ENCODE measurements at regions of chr1 and their contacts with region 1.

Region 1: DNA sequence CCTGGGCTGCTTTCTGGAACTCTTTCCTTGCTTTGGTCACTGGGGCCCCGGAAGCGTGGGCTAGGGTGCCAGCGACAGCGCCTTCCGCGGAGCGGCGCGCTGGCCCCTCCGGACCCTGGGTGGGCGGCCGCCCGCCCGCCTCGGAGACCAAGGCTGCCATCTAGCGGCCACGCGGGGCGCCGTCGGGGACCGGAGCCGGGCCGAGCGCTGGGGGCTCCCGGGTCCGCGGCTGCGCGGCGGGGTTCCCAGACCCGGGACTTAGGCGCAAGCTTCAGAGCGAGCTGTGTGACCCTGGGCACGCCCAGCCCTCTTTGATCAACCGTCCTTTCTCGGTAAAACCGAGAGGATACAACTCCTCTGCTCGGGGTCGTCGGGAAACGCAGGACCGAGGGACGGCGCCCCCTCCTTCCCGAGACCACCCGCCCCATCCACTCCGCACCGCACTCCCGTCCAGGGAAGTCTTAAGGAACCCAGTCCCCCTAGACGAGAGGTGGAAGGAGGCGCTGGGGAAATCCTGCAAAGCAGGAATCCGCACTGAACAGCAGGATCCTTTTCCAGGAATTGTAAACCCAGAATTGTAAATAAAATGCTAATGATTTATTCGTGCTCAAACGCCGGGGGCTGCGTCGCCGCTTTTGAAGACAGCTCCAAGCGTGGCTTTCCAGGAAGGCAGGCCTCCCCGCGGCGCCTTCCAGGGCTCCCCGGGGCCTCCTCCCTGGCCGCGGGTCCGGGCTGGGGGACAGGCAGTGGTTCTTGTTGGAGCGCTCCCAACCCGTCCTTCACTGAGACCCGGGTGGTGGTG is 41.2 kb downstream of the RRAGC start:
- DNase-seq: peak; percentile 83
- CTCF ChIP-seq: peak; percentile 85

Region 2: DNA sequence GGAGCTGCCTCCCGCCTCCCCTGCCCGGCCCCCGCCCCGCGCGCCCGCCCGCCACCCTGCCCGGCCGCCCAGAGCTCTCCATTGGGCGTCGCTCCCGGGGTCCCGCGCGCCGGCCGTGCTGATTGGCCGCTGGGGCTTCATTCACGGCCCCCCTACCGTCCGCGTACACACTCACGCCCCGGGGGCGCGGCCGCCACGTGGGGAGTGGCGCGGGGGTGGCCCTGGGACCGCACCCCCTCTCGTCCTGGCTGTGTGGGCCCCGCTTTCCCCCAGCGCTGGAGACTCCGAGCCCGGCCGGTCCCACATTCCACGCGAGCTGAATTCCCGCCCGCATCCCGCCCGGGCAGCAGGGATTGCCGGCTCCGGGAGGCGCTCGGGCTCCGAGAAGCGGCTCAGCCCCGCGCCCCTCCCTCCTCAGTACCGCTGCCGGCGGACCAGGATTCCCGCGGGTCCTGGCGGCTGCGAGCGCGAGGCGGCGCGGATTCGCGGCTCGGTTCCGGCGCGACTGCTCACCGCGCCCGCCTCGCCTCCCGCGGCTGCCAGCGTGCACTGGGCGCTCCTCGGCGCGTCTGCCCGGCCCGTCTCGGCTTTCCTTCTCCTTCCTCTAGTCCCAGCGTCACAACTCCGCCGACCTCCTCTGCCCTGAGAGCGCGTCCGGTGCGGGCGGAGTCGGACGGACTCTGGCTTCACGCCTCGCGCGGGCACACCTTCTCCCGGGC is 771.3 kb before region 1 on chr1:
- in situ Hi-C with region 1: loop called (anchors 25 kb)
- DNase-seq: peak; percentile 92
- CTCF ChIP-seq: no peak

Region 3: DNA sequence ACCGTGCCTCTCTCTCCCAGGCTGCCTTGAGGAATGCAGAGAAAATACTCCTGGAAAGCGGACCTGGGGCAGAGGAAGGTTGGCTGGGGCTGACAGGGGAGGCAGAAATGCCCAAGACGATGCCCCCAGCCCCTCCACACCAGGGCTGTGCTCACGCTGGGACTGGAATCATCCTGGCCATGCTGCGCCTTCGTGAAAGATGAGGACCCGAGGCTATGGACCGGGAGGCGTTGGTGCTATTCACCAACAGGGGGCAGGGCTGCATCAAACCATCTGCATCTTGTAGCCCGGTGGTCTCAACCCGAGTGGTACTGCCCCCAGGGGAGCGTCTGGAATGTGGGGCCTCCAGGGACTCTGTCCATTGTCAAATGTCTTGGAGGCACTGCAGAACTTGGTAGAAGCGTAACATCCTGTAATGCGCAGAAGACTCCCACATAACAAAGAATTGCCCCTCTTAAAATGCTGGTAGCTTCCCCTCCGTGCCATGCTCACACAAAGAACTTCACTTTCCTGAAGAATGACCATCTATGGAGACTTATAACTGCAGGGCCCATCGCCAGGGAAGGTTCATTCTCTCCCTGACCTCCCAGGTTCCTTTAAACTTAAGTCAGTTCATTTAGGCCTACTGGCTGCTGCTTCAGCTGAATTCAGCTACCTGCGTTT is 210.0 kb before region 1 on chr1:
- in situ Hi-C with region 1: loop called (anchors 25 kb)
- DNase-seq: peak; percentile 67
- CTCF ChIP-seq: peak; percentile 34